Psoas muscle (tissue), 8 donors: ENCODE measurements at regions of chr16 and their contacts with region 1.

Region 1: GRCh38 chr16:85759631-85760419 is 8.9 kb upstream of the C16orf74 start:
- DNase-seq: peak in 1 of 2 donors; percentile 78
- ATAC-seq: peak; percentile 75 to 94 (median 86)
- H3K4me3 ChIP-seq: no peak overlapping the region
- H3K27ac ChIP-seq: no peak overlapping the region
- H3K4me1 ChIP-seq: no peaks in the 10 kb centered on the region
- H3K27me3 ChIP-seq: peaks cover 0 to 11% (median 0%) of the 10 kb centered on the region in 3 donors
- CTCF ChIP-seq: peak; percentile 55

Region 2: DNA sequence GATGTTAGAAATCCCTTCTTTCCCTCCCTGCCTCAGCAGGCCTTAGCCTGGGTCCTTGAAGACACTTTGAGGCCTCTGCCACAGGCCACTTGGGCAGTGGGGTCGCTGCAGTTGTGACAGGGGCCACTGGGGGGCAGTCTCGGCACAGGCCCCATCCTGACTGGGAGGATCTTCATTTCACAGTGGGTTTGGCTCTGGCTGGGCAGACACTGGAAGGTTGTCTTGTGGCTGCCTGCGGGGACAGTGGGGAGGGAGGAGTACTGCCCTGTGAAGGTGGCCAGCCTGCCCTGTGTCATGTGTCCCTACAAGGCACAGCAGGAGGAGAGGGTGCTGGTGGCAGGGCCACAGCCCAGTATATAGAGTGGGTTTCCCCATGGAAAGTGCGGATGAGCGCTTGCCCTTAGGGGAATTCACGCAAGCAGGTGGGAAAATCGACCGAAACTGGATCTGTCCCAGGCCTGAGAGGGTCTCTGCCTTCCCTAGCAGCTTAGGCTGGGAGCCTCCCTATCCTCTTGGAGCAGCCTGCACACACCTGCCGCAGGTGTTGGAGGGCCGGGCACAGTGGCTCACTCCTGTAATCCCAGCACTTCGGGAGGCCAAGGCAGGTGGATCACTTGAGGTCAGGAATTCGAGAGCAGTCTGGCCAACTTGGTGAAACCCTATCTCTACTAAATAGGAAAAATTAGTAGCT is 99.9 kb before region 1 on chr16:
- intact Hi-C with region 1: loop called (anchors 1 to 2 kb)
- DNase-seq: peak; percentile 73 to 89
- ATAC-seq: peak; percentile 82 to 88 (median 86)
- H3K4me3 ChIP-seq: no peak overlapping the region
- H3K27ac ChIP-seq: peak overlapping the region; percentile 43
- H3K4me1 ChIP-seq: peaks cover 15% of the 10 kb centered on the region
- H3K27me3 ChIP-seq: no peaks in the 10 kb centered on the region
- CTCF ChIP-seq: peak; percentile 90

Region 3: GRCh38 chr16:85717393-85718121 is 42.3 kb before region 1 on chr16:
- intact Hi-C with region 1: no loop called
- DNase-seq: peak; percentile 71 to 84
- ATAC-seq: peak; percentile 47 to 69 (median 60)
- H3K4me3 ChIP-seq: no peak overlapping the region
- H3K27ac ChIP-seq: no peak overlapping the region
- H3K4me1 ChIP-seq: peaks cover 26% of the 10 kb centered on the region
- H3K27me3 ChIP-seq: peaks cover 0 to 2% (median 0%) of the 10 kb centered on the region in 3 donors
- CTCF ChIP-seq: peak; percentile 79

Region 4: GRCh38 chr16:85853547-85854545 is 94.0 kb after region 1 on chr16:
- intact Hi-C with region 1: no loop called
- DNase-seq: no peak
- ATAC-seq: no peak
- H3K4me3 ChIP-seq: no peak overlapping the region
- H3K27ac ChIP-seq: no peak overlapping the region
- H3K4me1 ChIP-seq: no peaks in the 10 kb centered on the region
- H3K27me3 ChIP-seq: peaks cover 0 to 7% (median 3%) of the 10 kb centered on the region in 3 donors
- CTCF ChIP-seq: no peak